AG04449 (cell line): ENCODE measurements at regions of chr11 and their contacts with region 1.

Region 1: GRCh38 chr11:36421546-36422155 is 88.4 kb downstream of the TRAF6 start:
- DNase-seq: no peak
- H3K4me3 ChIP-seq: no peak overlapping the region
- CTCF ChIP-seq: no peak

Region 2: DNA sequence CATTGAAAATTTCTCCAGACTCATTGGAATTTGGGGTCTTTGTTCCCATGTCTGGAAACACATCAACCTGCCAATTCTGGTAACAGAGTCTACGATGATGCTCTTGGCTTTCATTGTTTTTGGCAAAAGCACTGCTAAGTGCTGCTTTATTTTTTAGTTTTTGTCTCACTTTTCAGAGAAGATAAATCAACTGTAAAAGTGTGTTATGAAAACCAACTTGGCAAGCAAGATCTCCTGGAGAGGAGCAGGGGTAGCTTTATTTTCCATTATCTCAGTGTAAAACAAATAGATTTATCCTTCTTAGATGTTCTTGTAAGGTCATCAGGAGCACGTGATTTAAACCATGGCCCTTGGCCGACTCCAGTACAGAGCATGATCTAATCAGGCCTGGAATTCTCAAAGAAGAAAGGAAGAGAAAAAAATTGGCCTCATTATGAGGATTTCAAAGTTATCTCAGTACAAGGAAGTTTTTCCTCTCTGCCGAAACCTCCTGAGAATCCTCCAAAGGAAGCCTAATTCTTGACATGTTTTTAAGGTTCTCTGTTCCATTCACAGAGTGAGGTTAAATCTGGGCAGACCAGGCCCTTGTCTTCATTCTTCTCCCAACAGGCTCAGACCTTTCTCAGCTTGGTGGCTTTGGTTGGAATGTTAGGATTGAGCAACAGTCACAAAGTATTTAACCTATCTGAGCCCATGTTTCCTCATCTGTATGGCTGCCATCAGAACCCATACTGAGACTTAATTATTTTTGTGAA is 879.9 kb before region 1 on chr11:
- CTCF ChIA-PET with region 1: no interaction called
- POLR2A ChIA-PET with region 1: no interaction called
- DNase-seq: peak; percentile 85
- H3K4me3 ChIP-seq: no peak overlapping the region
- CTCF ChIP-seq: no peak

Region 3: GRCh38 chr11:36390963-36391471 is 30.6 kb before region 1 on chr11:
- CTCF ChIA-PET with region 1: no interaction called
- POLR2A ChIA-PET with region 1: no interaction called
- DNase-seq: no peak
- H3K4me3 ChIP-seq: no peak overlapping the region
- CTCF ChIP-seq: no peak

Region 4: GRCh38 chr11:36455658-36456111 is 34.0 kb after region 1 on chr11:
- CTCF ChIA-PET with region 1: interaction called, 3 read pairs
- POLR2A ChIA-PET with region 1: interaction called, 22 read pairs
- DNase-seq: peak; percentile 99
- H3K4me3 ChIP-seq: peak overlapping the region; percentile 2; the same call in 1 of the 2 replicates
- CTCF ChIP-seq: no peak